ENCODE measurements at regions of chr3 and their contacts with region 1.

Region 1: DNA sequence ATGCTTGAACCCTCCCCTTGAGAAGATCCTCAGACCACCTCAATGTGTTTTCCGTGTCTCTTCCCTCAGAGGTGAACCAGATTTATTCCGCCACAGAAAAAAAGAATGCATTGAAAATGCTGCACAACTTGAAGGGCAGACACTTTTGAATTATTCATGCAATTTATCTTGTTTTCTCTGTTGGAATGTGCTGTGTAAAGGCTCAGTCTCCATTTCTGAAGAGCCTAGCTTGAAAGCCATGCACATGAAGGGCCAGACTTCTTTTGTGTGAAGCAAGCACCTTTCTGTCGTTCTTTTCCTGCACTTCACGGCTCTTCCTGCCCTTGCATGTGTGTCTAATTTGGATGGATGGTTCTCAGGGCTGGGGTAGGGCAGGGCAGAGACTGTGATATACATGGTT is 79.0 kb upstream of the ATP13A5 start:
- DNase-seq: no peak
- ATAC-seq: no peak
- H3K4me3 Mint-ChIP-seq: no peak overlapping the region
- H3K27ac Mint-ChIP-seq: no peak overlapping the region
- H3K4me1 Mint-ChIP-seq: peaks cover 3% of the 10 kb centered on the region; the same call in 1 of the 2 replicates
- H3K27me3 Mint-ChIP-seq: no peaks in the 10 kb centered on the region
- CTCF ChIP-seq: no peak

Region 2: GRCh38 chr3:193572426-193572908 is 114.9 kb after region 1 on chr3:
- CTCF ChIA-PET with region 1: interaction called, 10 read pairs
- POLR2A ChIA-PET with region 1: no interaction called
- DNase-seq: peak; percentile 65
- ATAC-seq: peak; percentile 94
- H3K4me3 Mint-ChIP-seq: no peak overlapping the region
- H3K27ac Mint-ChIP-seq: no peak overlapping the region
- H3K4me1 Mint-ChIP-seq: peaks cover 27% of the 10 kb centered on the region
- H3K27me3 Mint-ChIP-seq: no peaks in the 10 kb centered on the region
- CTCF ChIP-seq: peak; percentile 47; the same call in 1 of the 2 replicates